Endothelial cell of umbilical vein (primary cell): ENCODE measurements at regions of chr17 and their contacts with region 1.

Region 1: GRCh38 chr17:19338031-19338990 is 24.2 kb downstream of the B9D1 start:
- DNase-seq: peak; percentile 66
- H3K4me3 ChIP-seq: no peak overlapping the region
- H3K27ac ChIP-seq: no peak overlapping the region
- H3K4me1 ChIP-seq: no peaks in the 10 kb centered on the region
- H3K27me3 ChIP-seq: no peaks in the 10 kb centered on the region
- CTCF ChIP-seq: peak; percentile 71 to 86
- POLR2A ChIP-seq: no peak

Region 2: GRCh38 chr17:19237389-19238166 is 100.7 kb before region 1 on chr17:
- CTCF ChIA-PET with region 1: interaction called, 11 read pairs
- POLR2A ChIA-PET with region 1: no interaction called
- dilution Hi-C with region 1: no loop called
- intact Hi-C with region 1: no loop called
- DNase-seq: peak; percentile 51
- H3K4me3 ChIP-seq: peak overlapping the region; percentile 78 to 98 (median 80)
- H3K27ac ChIP-seq: peak overlapping the region; percentile 33
- H3K4me1 ChIP-seq: peaks cover 5% of the 10 kb centered on the region
- H3K27me3 ChIP-seq: no peaks in the 10 kb centered on the region
- CTCF ChIP-seq: peak; percentile 6
- POLR2A ChIP-seq: peak; percentile 26

Region 3: GRCh38 chr17:19254651-19255050 is 83.7 kb before region 1 on chr17:
- CTCF ChIA-PET with region 1: interaction called, 4 read pairs
- POLR2A ChIA-PET with region 1: interaction called, 10 read pairs
- dilution Hi-C with region 1: no loop called
- intact Hi-C with region 1: no loop called
- DNase-seq: peak; percentile 66
- H3K4me3 ChIP-seq: no peak overlapping the region
- H3K27ac ChIP-seq: peak overlapping the region; percentile 20
- H3K4me1 ChIP-seq: peaks cover 7% of the 10 kb centered on the region
- H3K27me3 ChIP-seq: no peaks in the 10 kb centered on the region
- CTCF ChIP-seq: no peak
- POLR2A ChIP-seq: no peak

Region 4: GRCh38 chr17:19304209-19304608 is 34.1 kb before region 1 on chr17:
- CTCF ChIA-PET with region 1: interaction called, 13 read pairs
- POLR2A ChIA-PET with region 1: no interaction called
- dilution Hi-C with region 1: no loop called
- intact Hi-C with region 1: no loop called
- DNase-seq: peak; percentile 74
- H3K4me3 ChIP-seq: no peak overlapping the region
- H3K27ac ChIP-seq: peak overlapping the region; percentile 48
- H3K4me1 ChIP-seq: peaks cover 23% of the 10 kb centered on the region
- H3K27me3 ChIP-seq: no peaks in the 10 kb centered on the region
- CTCF ChIP-seq: no peak
- POLR2A ChIP-seq: no peak

Region 5: DNA sequence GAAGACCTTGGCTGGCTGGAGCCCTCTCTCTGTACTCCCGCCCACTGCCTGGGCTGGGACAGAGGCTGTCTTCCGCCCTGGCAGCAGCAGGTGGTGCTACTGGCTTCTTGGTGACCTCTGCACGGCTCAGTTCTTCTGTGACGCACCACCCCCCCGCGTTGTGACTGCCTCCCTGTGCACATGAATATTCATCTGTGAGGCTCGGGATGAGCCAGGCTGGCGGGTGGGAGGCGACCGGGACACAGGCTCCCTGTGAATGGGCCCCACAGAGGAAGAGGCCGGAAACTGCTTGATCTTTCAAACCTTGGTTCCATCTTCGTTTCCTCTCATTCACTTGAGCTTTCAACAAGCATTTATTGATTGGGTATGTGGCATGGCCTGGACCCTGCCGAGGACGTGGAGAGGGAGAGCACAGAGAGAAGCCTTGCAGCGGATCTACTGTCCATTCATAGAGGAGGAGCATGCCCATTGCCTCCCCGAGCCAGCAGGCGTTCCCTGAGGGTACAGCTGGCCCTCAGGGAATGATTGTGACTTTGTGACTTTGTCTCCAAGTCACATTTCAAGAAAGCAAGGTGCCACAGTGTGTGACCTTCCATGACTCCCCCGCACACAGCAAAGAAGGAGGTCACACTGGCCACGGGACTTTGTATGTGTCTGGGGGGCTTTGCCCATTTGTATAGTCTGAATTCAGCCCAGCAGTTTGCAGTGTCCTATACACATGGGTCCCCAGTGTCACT is 20.8 kb before region 1 on chr17:
- CTCF ChIA-PET with region 1: interaction called, 25 read pairs
- POLR2A ChIA-PET with region 1: no interaction called
- dilution Hi-C with region 1: no loop called
- intact Hi-C with region 1: no loop called
- DNase-seq: peak; percentile 91
- H3K4me3 ChIP-seq: no peak overlapping the region
- H3K27ac ChIP-seq: peak overlapping the region; percentile 58
- H3K4me1 ChIP-seq: peaks cover 17% of the 10 kb centered on the region
- H3K27me3 ChIP-seq: no peaks in the 10 kb centered on the region
- CTCF ChIP-seq: peak; percentile 9 to 33
- POLR2A ChIP-seq: no peak

Region 6: GRCh38 chr17:19362277-19363113 is 24.2 kb after region 1 on chr17 and contains the start of gene B9D1:
- CTCF ChIA-PET with region 1: interaction called, 11 read pairs
- POLR2A ChIA-PET with region 1: no interaction called
- dilution Hi-C with region 1: no loop called
- intact Hi-C with region 1: no loop called
- DNase-seq: peak; percentile 93
- H3K4me3 ChIP-seq: peak within 1 kb of the TSS; percentile 53 to 66 (median 60)
- H3K27ac ChIP-seq: peak within 1 kb of the TSS; percentile 49
- H3K4me1 ChIP-seq: peaks cover 8% of the 10 kb centered on the region
- H3K27me3 ChIP-seq: no peaks in the 10 kb centered on the region
- CTCF ChIP-seq: peak; percentile 88 to 95
- POLR2A ChIP-seq: peak; percentile 10
- total RNA-seq, gene B9D1: 17.9 and 20.5 TPM in 2 replicates

Region 7: DNA sequence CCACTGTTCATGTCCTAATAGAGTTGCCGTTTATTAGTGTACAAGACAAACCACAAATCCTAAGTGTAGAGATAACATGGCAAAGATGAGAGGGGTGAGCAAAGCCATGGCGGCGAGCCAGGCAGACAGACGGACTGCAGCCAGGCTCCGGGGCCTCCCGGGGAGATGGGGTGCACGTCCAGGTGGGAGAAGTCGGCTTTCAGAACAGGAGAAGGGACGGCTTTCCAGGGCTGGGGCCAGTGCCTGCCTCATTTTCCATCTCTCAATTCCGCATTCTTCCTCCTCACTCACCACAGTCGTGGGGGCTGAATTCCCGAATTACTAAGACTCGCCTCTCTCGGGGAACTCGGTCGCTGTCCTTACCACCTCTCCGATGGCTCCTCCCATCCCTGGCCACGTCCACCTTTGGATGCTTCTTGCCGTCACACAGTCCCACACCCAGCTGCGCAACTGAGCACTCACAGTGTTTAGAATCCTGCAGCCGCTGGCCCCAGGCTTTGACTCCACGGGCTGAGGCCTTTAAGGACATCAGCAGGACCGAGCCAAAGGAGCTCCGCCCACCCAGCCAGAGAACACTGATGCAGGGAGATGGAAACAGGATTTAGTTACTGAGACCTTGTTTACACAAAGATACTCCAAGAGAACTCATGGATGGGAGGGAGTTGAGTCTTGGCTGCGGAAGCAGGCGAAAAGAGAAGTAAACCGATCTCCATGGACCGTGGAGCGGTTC is 132.4 kb after region 1 on chr17:
- CTCF ChIA-PET with region 1: no interaction called
- POLR2A ChIA-PET with region 1: no interaction called
- dilution Hi-C with region 1: no loop called
- intact Hi-C with region 1: no loop called
- DNase-seq: no peak
- H3K4me3 ChIP-seq: no peak overlapping the region
- H3K27ac ChIP-seq: no peak overlapping the region
- H3K4me1 ChIP-seq: no peaks in the 10 kb centered on the region
- H3K27me3 ChIP-seq: no peaks in the 10 kb centered on the region
- CTCF ChIP-seq: no peak
- POLR2A ChIP-seq: no peak